ENCODE measurements at regions of chr19 and their contacts with region 1.

Region 1: DNA sequence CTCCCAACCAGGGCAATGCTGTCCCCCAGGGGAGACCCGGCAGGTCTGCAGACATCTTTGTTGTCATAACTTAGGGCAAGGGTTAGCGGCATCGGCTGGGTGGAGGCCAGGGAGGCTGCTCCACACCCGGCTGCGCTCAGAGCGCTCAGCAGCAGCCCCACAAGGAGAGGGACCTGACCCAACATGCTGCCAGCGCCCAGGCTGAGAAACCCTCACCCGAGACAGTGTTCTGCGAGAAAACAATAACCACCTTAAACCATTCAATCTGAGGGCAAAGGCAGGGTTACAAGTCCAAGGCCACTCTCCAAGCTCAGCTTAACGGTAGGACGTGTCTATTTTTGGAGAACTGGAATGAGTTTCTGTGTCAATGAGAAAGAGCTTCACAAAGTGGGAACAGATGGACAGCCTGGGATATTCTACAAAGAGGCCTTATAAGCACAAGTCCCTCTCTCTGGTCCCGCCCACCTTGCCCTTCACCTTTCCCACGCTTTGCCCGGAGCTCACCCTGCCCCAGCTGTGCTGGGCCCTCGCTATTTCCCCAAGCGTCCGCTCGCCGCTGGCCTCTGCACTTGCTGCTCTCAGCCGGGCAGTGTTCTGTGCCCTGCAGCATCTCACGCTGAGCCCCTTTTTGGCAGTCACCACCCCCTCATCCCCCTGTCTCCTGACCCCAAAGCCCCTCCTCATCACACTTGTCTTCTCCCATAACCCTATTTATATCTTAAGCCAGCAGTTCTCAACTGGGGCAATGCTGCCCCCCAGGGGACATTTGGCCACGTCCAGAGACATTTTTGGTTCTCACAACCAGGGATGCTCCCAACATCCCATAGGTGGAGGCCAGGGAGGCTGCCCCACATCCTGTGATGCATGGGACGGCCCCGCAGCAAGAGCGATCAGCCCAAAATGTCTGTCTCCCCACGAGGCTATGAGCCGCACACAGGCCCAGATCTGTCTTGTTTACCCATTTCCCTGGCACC is 17.6 kb downstream of the PPP1R12C start:
- DNase-seq: peak in 1 of 5 donors; percentile 42
- H3K4me3 ChIP-seq: no peak overlapping the region
- H3K4me3 Mint-ChIP-seq: no peak overlapping the region
- H3K27ac ChIP-seq: no peak overlapping the region
- H3K27ac Mint-ChIP-seq: no peak overlapping the region
- H3K4me1 ChIP-seq: no peaks in the 10 kb centered on the region
- H3K4me1 Mint-ChIP-seq: peaks cover 0 to 2% (median 0%) of the 10 kb centered on the region in 3 donors
- H3K27me3 ChIP-seq: no peaks in the 10 kb centered on the region
- H3K27me3 Mint-ChIP-seq: no peaks in the 10 kb centered on the region

Region 2: GRCh38 chr19:55088543-55089341 is 11.1 kb before region 1 on chr19:
- CTCF ChIA-PET with region 1: interaction called, 10 read pairs
- POLR2A ChIA-PET with region 1: interaction called, 3 read pairs
- DNase-seq: peak; percentile 51 to 84 (median 70)
- H3K4me3 ChIP-seq: no peak overlapping the region
- H3K4me3 Mint-ChIP-seq: peak overlapping the region; percentile 50 to 76 (median 68)
- H3K27ac ChIP-seq: no peak overlapping the region
- H3K27ac Mint-ChIP-seq: peak overlapping the region in 2 of 8 donors; percentile 17 to 50
- H3K4me1 ChIP-seq: peaks cover 20% of the 10 kb centered on the region
- H3K4me1 Mint-ChIP-seq: peaks cover 12 to 32% (median 21%) of the 10 kb centered on the region in 3 donors
- H3K27me3 ChIP-seq: peaks cover 16% of the 10 kb centered on the region
- H3K27me3 Mint-ChIP-seq: peaks cover 35 to 50% of the 10 kb centered on the region in 2 donors

Region 3: GRCh38 chr19:55253842-55254624 is 154.2 kb after region 1 on chr19:
- CTCF ChIA-PET with region 1: no interaction called
- POLR2A ChIA-PET with region 1: no interaction called
- DNase-seq: peak; percentile 53 to 88 (median 79)
- H3K4me3 ChIP-seq: peak overlapping the region; percentile 89
- H3K4me3 Mint-ChIP-seq: peak overlapping the region; percentile 95 to 98 (median 98)
- H3K27ac ChIP-seq: peak overlapping the region; percentile 83
- H3K27ac Mint-ChIP-seq: peak overlapping the region; percentile 95 to 100 (median 98)
- H3K4me1 ChIP-seq: peaks cover 80% of the 10 kb centered on the region
- H3K4me1 Mint-ChIP-seq: peaks cover 64 to 82% (median 68%) of the 10 kb centered on the region in 3 donors
- H3K27me3 ChIP-seq: no peaks in the 10 kb centered on the region
- H3K27me3 Mint-ChIP-seq: peaks cover 0 to 3% of the 10 kb centered on the region in 2 donors

Measured in CD8-positive, alpha-beta memory T cell (primary cell).